ENCODE measurements at regions of chr4 and their contacts with region 1.

Region 1: GRCh38 chr4:23022032-23022431 is 329.3 kb downstream of the GBA3 start:
- DNase-seq: peak; percentile 75
- H3K4me3 Mint-ChIP-seq: no peak overlapping the region
- H3K27ac Mint-ChIP-seq: peak overlapping the region; percentile 73
- H3K4me1 Mint-ChIP-seq: peaks cover 14% of the 10 kb centered on the region
- H3K27me3 Mint-ChIP-seq: no peaks in the 10 kb centered on the region
- CTCF ChIP-seq: no peak

Region 2: DNA sequence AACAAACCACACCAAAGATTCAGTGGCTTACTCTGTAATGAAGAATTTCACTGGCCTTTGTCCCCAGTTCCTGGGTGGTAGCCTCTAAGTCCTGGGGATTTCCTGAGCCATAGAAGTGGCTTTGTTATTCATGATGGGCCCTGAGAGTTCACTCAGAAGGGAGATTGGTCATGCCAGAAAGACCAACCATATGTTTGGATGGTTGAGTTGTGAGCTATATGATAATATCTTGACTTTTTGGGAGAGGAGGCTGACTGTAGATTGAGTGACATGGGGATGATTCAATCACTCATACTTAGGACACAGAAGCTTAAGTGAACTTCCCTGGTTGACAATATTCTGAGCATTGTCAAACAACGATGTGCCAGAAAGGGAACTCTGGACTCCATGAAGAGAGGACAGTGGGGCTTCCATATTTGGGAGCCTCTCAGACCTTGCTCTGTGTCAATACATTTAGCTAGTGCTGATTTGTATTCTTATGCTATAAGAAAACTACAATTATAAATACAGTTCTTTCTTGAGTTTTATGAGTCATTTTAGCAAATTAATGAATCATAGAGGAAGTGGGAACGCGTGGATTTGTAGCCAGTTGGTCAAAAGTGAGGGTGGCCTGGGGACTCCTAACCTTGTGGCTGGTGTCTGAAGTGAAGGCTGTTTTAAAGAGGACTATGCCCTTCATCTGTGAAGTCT is 62.7 kb after region 1 on chr4:
- CTCF ChIA-PET with region 1: no interaction called
- POLR2A ChIA-PET with region 1: no interaction called
- intact Hi-C with region 1: loop called (anchors 10 kb)
- DNase-seq: peak; percentile 11
- H3K4me3 Mint-ChIP-seq: no peak overlapping the region
- H3K27ac Mint-ChIP-seq: no peak overlapping the region
- H3K4me1 Mint-ChIP-seq: peaks cover 5% of the 10 kb centered on the region
- H3K27me3 Mint-ChIP-seq: no peaks in the 10 kb centered on the region
- CTCF ChIP-seq: no peak